ENCODE measurements at regions of chr6 and their contacts with region 1.

Region 1: GRCh38 chr6:56507517-56507916 is 135.2 kb downstream of the DST start:
- DNase-seq: no peak
- H3K4me3 ChIP-seq: no peak overlapping the region
- H3K27ac ChIP-seq: peak overlapping the region; percentile 72 to 96 (median 84)
- H3K4me1 ChIP-seq: peaks cover 0 to 86% (median 69%) of the 10 kb centered on the region in 4 donors
- H3K27me3 ChIP-seq: no peaks in the 10 kb centered on the region
- CTCF ChIP-seq: no peak
- EP300 ChIP-seq: no peak
- POLR2A ChIP-seq: no peak

Region 2: DNA sequence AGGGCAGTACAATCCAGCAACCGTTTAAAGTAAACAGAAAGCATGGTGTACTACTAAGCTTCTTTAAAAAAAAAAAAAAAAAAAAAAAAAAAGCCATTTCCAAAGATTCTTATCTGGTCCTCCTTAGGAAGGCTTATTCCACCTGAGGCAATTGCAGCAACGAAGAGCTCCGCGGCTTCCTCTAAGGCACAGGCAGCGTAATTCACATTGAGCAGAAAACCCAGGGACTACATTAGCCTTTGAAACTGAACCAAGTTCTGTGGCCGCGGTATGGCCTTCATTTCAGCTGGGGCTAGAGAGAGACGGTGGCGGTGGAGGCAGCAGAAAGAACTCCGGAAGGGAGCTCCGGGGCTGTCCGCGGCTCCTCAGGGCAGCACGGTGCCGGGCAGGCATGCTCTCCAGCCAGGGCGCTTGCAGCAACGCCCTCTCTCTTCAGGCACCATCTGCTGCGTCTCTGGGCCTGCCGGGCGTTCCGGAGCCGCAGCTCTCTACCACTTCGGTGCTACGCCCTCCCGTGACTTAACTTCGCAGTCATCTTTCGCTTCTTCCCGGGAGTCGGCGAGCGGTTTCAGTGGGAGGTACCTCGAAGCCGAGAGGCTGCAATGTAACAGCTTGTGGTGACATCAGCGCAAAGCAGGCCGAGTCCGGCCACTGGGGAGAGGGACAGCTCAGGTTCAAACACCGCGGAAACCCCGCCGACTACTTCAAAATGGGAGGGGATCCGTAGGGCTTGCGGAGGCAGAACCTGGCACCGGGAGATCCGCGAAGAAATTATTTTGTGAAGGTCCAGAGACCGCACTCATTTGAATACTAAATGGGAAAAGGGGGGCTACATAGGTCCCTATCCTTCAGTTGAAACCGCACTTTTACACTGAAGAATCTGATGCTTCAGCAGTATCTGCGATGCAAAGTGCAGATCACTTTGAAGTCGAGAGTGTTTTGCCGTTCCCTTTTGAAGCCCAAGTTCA is 35.1 kb after region 1 on chr6:
- intact Hi-C with region 1: loop called (anchors 5 kb)
- DNase-seq: peak; percentile 99
- H3K4me3 ChIP-seq: peak overlapping the region; percentile 56 to 71 (median 68)
- H3K27ac ChIP-seq: peak overlapping the region; percentile 92 to 96 (median 94)
- H3K4me1 ChIP-seq: peaks cover 0 to 50% (median 37%) of the 10 kb centered on the region in 4 donors
- H3K27me3 ChIP-seq: no peaks in the 10 kb centered on the region
- CTCF ChIP-seq: peak in 2 of 4 experiments; percentile 24 to 29
- EP300 ChIP-seq: peak in 1 of 4 donors; percentile 60
- POLR2A ChIP-seq: peak; percentile 84 to 91